Posterior cingulate gyrus (tissue), 11 donors: ENCODE measurements at regions of chr21 and their contacts with region 1.

Region 1: DNA sequence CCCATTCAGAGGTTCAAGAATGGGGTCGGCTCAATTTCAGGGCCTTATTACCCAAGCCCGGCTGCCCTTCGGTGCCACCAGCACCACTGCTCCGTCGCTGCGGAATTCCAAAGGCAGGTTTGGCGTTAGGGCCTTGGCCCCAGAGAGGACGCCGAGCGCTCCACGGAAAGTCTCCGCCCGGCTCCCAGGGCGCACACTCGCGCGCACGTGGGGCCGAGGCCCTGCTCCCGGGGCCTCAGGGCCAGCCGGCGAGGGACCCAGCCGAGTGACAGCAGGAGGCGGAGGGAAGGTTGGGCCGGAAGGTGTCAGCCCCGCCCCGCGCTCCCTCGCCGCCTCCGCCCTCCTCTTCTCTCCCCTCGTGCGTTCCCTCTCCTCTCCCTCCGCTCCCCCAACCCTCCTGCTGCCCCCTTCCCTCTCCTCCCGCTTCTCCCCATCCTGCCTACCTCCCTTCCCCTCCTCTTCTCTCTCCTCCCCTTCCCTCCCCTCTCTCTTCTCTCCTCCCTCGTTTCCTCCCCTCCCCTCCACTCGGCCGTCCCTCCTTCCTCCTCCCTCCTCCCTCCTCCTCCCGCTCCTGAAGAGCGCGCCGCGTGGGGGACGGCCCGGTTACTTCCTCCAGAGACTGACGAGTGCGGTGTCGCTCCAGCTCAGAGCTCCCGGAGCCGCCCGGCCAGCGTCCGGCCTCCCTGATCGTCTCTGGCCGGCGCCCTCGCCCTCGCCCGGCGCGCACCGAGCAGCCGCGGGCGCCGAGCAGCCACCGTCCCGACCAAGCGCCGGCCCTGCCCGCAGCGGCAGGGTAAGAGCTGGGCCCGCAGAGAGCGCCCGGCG is at the start of gene ETS2:
- DNase-seq: peak; percentile 50 to 97 (median 79)

Region 2: DNA sequence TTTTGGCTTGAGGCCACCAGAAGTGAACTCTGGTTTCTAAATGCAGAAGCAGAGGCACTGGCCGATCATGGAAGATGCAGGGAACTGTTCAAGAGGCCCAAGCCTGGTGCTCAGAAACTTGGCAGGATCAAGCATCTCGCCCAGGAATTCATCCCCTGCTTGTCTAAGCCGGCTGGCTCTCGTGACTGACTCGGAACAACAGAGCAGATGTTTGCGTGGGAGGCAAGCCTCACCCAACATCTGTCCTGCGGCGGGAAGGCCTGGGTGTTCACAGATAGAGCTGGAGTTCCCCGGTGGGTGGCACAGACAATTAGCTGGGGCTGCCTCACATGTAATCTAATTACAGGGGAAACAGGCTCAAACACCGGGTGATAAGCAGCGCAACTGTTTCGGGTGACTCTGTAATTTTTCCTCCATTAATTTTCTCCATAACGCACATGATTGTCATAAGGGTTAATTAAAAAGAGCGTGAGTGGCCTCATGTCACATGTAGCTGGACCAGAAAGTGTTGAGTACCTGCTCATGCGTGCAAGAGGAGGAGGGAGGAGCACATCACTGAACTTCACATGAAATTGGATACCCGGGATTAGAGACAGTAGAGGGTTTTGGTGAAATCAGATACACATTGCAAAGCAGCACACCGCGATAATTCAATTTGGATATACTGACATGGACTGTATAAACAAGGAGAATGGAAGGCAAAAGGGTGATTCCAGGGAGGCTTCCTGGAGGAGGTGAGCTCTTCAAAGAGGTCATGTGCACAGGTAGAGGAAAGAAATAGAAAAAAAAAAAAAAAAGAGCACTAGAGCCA is 180.2 kb after region 1 on chr21:
- intact Hi-C with region 1: loop called (anchors 10 kb)
- DNase-seq: peak in 1 of 10 donors; percentile 85

Region 3: GRCh38 chr21:39125752-39126485 is 320.4 kb after region 1 on chr21:
- intact Hi-C with region 1: loop called (anchors 5 kb)
- DNase-seq: peak in 2 of 10 donors; percentile 11 to 22

Region 4: GRCh38 chr21:39313571-39314142 is 508.1 kb after region 1 on chr21 and contains the start of gene BRWD1:
- intact Hi-C with region 1: no loop called
- DNase-seq: peak; percentile 61 to 96 (median 71)